ENCODE measurements at regions of chr14 and their contacts with region 1.

Region 1: GRCh38 chr14:31926123-31926522 is 151.0 kb upstream of the ARHGAP5 start:
- DNase-seq: no peak
- ATAC-seq: no peak
- H3K4me3 ChIP-seq: no peak overlapping the region
- H3K27ac ChIP-seq: peak overlapping the region; percentile 6 to 91 (median 80)
- H3K4me1 ChIP-seq: peaks cover 6 to 42% (median 25%) of the 10 kb centered on the region in 12 donors
- H3K27me3 ChIP-seq: no peaks in the 10 kb centered on the region
- CTCF ChIP-seq: peak; percentile 28 to 61 (median 44)
- POLR2A ChIP-seq: no peak

Region 2: DNA sequence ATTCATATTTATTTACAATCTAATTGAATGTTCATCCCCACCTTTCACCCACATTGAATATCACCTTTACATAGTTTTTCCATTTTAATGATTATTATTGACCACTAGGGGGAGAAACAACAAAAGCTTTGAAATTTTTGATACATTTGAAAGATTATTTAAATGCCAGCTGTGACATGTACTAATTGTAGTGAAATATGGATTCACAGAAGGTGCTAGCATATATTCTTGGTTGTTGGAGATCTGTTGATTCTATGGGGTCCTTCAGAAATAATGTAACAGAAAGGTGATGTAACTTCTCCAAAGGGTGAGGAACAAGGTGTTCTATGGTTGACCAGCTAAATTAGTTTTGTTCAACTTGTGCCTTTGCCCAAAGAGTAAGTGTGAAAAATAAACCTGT is 415.9 kb before region 1 on chr14:
- intact Hi-C with region 1: loop called in 1 of 10 experiments (anchors 10 kb)
- DNase-seq: no peak
- ATAC-seq: peak in 1 of 4 donors; percentile 22
- H3K4me3 ChIP-seq: no peak overlapping the region
- H3K27ac ChIP-seq: no peak overlapping the region
- H3K4me1 ChIP-seq: peaks cover 0 to 13% (median 8%) of the 10 kb centered on the region in 12 donors
- H3K27me3 ChIP-seq: no peaks in the 10 kb centered on the region
- CTCF ChIP-seq: peak; percentile 52 to 90 (median 68)
- POLR2A ChIP-seq: no peak

Region 3: GRCh38 chr14:31561155-31561846 is 364.8 kb before region 1 on chr14 and contains the start of gene NUBPL:
- intact Hi-C with region 1: loop called in 2 of 10 experiments (anchors 5 to 10 kb)
- DNase-seq: peak; percentile 94 to 98 (median 96)
- ATAC-seq: peak; percentile 92 to 98 (median 96)
- H3K4me3 ChIP-seq: peak within 1 kb of the TSS; percentile 77 to 98 (median 84)
- H3K27ac ChIP-seq: peak within 1 kb of the TSS; percentile 43 to 95 (median 89)
- H3K4me1 ChIP-seq: peaks cover 0 to 29% (median 10%) of the 10 kb centered on the region in 12 donors
- H3K27me3 ChIP-seq: no peaks in the 10 kb centered on the region
- CTCF ChIP-seq: no peak
- POLR2A ChIP-seq: peak in 1 of 2 donors; percentile 60
- total RNA-seq, gene NUBPL: 16.1 to 28.7 (median 19.1) TPM

Region 4: DNA sequence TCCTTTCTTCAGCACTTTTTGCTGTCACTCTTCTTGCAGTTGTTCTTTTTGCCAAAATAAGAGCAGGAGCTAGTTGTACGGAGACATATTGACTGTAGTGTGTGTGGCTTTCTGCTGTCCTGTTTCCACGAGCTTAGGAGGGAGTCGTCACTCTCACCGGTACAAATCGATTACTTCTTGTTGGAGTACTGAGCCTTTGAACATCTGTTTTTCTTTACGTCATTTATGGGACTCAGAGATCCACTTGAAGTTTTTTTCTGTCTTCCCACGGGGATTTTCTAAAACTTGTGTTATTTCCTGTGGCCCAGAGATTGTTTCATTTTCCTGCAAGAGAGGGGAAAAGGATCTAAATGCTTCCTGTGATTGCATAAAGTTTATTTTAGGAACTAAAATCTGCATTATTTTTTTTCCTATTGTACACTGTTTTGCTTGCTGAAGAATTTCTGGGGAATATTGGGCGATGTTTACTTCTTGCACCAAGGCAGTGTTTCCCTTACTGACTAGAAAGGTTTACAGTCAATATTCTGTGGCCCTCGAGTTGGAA is 48.8 kb before region 1 on chr14:
- intact Hi-C with region 1: loop called in 2 of 10 experiments (anchors 5 kb)
- DNase-seq: no peak
- ATAC-seq: peak; percentile 36 to 90 (median 60)
- H3K4me3 ChIP-seq: peak overlapping the region in 9 of 12 donors; percentile 8 to 36 (median 23)
- H3K27ac ChIP-seq: peak overlapping the region; percentile 13 to 84 (median 70)
- H3K4me1 ChIP-seq: peaks cover 0 to 31% (median 15%) of the 10 kb centered on the region in 12 donors
- H3K27me3 ChIP-seq: no peaks in the 10 kb centered on the region
- CTCF ChIP-seq: no peak
- POLR2A ChIP-seq: no peak

Region 5: DNA sequence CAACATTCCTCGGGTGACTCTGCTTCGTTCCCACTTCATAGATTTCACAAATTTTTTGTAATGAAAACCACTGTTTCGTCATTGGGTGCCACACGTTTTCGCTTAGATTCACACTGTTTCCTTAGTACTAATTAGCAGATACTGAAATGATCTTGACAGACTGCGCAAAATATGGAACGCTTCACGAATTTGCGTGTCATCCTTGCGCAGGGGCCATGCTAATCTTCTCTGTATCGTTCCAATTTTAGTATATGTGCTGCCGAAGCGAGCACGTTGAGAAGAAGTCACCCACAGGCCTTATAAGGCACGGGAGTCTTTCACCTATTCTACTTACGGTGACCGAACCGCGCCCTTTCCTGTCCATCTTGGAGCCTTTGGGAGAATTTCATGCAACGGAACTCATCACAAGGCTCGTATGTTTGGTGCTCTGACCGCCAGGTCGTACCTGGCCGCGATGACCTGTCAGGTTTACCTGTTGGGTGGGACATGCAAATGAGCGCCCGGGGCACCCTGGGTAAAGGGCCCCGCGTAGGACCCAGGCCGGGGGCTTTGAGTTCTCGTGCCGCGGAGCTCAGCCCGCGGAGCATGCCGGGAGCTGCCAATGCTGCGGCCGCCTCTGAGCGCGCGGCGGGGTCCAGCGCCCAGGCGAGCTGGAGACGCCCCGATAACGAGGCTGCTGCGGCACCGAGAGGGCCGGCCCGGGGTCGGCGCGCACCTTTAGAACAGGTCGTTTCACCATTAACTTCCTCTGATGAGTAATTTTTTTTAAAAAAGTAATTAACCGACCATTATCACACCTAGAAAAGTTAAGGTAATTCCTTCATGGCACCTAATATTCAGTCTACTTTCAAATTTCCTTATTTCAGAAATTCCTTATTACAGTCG is 277.1 kb after region 1 on chr14 and contains the start of gene RNU6-8:
- intact Hi-C with region 1: loop called in 1 of 10 experiments (anchors 5 kb)
- DNase-seq: peak; percentile 87 to 94 (median 92)
- ATAC-seq: peak; percentile 84 to 93 (median 92)
- H3K4me3 ChIP-seq: peak within 1 kb of the TSS; percentile 40 to 81 (median 71)
- H3K27ac ChIP-seq: peak within 1 kb of the TSS; percentile 75 to 95 (median 90)
- H3K4me1 ChIP-seq: peaks cover 0 to 39% (median 7%) of the 10 kb centered on the region in 12 donors
- H3K27me3 ChIP-seq: peaks cover 0 to 11% (median 0%) of the 10 kb centered on the region in 9 donors
- CTCF ChIP-seq: no peak
- POLR2A ChIP-seq: peak in 1 of 2 donors; percentile 70
- total RNA-seq, gene RNU6-8: not detected

Region 6: DNA sequence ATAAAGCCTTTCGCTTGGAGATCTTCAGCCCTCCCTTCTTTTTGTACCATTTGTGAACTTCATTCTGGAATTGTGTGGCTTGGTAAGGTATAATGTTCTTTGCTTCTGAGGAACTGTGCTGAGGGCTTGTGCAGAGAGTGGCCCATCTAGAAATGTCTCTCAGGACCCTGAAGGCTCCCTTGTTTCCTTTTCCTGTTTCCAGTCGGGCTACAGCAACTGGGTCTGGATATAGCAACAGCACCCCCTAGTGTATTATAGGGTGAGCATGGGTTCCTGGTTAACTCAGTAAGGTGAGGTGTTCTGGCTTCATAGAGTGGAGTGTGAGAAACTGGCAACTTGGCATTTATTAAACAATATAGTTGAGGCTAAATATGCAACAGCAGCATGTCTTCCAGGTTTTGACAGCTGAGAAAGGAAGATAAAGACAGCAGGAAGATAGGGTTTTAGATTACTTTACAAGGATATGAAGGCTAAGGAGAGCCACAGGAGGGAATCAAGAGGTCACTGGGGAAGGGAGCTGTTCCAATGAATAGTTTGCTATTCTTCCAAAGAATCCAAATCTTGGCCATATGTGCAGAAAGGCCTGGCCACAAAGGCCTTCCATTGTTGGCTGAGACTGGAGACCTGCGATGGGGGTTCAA is 326.0 kb after region 1 on chr14:
- intact Hi-C with region 1: loop called in 1 of 10 experiments (anchors 2 kb)
- DNase-seq: peak in 3 of 5 donors; percentile 37 to 56 (median 39)
- ATAC-seq: peak; percentile 63 to 84 (median 83)
- H3K4me3 ChIP-seq: no peak overlapping the region
- H3K27ac ChIP-seq: peak overlapping the region in 4 of 12 donors; percentile 0 to 63 (median 20)
- H3K4me1 ChIP-seq: peaks cover 0 to 30% (median 12%) of the 10 kb centered on the region in 12 donors
- H3K27me3 ChIP-seq: no peaks in the 10 kb centered on the region
- CTCF ChIP-seq: peak; percentile 66 to 90 (median 83)
- POLR2A ChIP-seq: no peak

Region 7: DNA sequence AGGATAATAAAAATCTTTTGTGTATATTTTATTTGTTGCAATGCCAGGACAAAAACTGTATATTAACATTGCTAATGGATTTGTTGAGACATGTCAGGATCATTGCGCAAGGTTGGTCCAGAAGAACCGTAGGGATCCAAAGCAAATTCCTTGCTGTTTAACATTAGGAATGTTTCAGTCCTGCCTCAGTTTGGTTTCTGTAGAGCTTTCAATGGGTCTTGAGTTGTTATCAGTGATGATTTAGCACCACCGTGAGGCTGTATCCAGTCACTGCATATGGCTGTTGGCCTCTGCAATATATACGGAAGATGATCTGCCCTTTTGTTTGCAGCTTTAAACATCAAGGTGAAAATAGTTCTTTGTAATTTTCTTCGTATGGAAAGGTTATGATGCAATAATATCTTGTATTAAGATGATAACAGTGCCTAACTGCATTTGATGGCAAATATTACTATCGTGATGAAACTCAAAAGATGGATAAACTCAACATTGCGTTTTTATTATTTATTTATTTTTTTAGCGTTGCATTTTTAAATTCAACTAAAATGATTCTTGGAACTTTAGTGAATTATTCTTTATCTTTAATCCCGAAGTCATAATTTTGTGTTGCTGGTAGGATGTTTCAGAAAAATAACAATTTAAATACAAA is 634.2 kb after region 1 on chr14:
- intact Hi-C with region 1: loop called in 3 of 10 experiments (anchors 5 to 10 kb)
- DNase-seq: peak in 3 of 5 donors; percentile 29 to 42 (median 39)
- ATAC-seq: peak; percentile 46 to 83 (median 73)
- H3K4me3 ChIP-seq: no peak overlapping the region
- H3K27ac ChIP-seq: peak overlapping the region in 10 of 12 donors; percentile 9 to 71 (median 44)
- H3K4me1 ChIP-seq: peaks cover 0 to 54% (median 21%) of the 10 kb centered on the region in 12 donors
- H3K27me3 ChIP-seq: no peaks in the 10 kb centered on the region
- CTCF ChIP-seq: peak; percentile 67 to 92 (median 80)
- POLR2A ChIP-seq: no peak